Caco-2 (cell line): ENCODE measurements at regions of chr15 and their contacts with region 1.

Region 1: GRCh38 chr15:83323296-83323711 is 38.8 kb upstream of the BNC1 start:
- DNase-seq: peak; percentile 73 to 83
- H3K4me3 ChIP-seq: 0 out of 2 replicates have a peak overlapping the region, but pooled peaks have one; percentile 3
- H3K4me3 Mint-ChIP-seq: peak overlapping the region; percentile 64
- H3K27ac Mint-ChIP-seq: peak overlapping the region; percentile 77
- H3K4me1 ChIP-seq: peaks cover 13% of the 10 kb centered on the region
- H3K4me1 Mint-ChIP-seq: no peaks in the 10 kb centered on the region
- H3K27me3 ChIP-seq: no peaks in the 10 kb centered on the region
- H3K27me3 Mint-ChIP-seq: no peaks in the 10 kb centered on the region
- CTCF ChIP-seq: no peak

Region 2: DNA sequence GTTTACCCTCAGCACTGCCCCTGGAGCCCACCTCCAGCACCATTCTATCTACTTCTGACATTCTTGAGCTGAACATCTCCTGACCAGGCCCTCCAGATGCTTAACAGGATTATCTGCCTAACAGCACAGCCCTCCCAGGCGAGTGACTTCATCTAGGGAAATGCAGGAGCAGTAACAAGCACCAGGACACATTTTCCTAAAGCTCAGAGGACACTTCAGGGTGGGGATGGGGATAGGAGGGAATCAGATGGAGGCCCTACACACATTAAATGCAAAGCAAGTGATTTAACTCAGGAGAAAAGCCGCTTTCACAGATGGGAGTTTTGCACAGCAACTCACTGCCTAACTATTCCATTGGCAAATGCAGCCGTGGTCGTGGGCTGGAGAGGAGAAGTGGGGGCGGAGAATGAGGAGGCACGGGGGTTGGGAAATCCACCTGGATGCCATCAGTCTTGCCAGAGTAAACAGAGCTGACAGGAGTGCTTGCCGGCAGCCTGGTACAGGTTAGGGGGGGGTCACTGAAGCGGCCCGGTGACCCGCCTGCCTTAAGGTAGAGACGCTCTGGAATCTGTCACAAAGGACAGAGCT is 17.5 kb before region 1 on chr15:
- CTCF ChIA-PET with region 1: interaction called, 3 read pairs
- POLR2A ChIA-PET with region 1: no interaction called
- intact Hi-C with region 1: loop called (anchors 2 kb)
- DNase-seq: peak; percentile 84 to 90
- H3K4me3 ChIP-seq: 0 out of 2 replicates have a peak overlapping the region, but pooled peaks have one; percentile 8
- H3K4me3 Mint-ChIP-seq: peak overlapping the region; percentile 54
- H3K27ac Mint-ChIP-seq: peak overlapping the region; percentile 74
- H3K4me1 ChIP-seq: peaks cover 35% of the 10 kb centered on the region
- H3K4me1 Mint-ChIP-seq: peaks cover 23% of the 10 kb centered on the region
- H3K27me3 ChIP-seq: no peaks in the 10 kb centered on the region
- H3K27me3 Mint-ChIP-seq: no peaks in the 10 kb centered on the region
- CTCF ChIP-seq: no peak

Region 3: DNA sequence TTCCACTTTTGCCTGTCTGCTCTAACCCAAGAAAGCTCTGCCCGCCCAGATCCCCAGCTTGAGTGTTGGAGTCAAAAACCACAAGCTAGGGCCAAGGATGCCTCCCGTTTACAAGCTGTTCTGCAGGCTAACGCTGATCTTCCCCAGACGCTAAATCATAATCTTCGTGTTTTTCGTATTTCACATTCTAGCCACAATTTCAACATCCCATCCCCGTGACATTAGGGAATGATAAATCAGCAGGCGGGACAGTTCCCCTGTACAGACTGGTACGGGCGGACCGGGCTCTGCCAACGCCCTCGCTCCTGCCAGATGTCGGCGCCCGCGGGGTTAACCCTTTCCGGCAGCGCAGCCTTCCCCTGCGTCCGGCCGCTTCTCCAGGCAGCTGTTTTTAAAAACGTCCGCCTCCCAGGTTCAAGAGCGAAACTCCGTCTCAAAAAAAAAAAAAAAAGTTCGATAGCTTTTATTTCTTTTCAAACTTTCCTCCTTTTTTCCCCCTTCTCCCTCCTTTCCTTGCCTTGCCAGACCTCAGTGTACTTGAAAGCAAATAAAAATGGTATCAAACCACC is 42.1 kb after region 1 on chr15:
- CTCF ChIA-PET with region 1: no interaction called
- POLR2A ChIA-PET with region 1: no interaction called
- intact Hi-C with region 1: no loop called
- DNase-seq: no peak
- H3K4me3 ChIP-seq: no peak overlapping the region
- H3K4me3 Mint-ChIP-seq: peak overlapping the region; percentile 46
- H3K27ac Mint-ChIP-seq: no peak overlapping the region
- H3K4me1 ChIP-seq: no peaks in the 10 kb centered on the region
- H3K4me1 Mint-ChIP-seq: peaks cover 5% of the 10 kb centered on the region
- H3K27me3 ChIP-seq: no peaks in the 10 kb centered on the region
- H3K27me3 Mint-ChIP-seq: peaks cover 23% of the 10 kb centered on the region
- CTCF ChIP-seq: no peak

Region 4: GRCh38 chr15:83734487-83734886 is 411.2 kb after region 1 on chr15:
- CTCF ChIA-PET with region 1: no interaction called
- POLR2A ChIA-PET with region 1: no interaction called
- intact Hi-C with region 1: no loop called
- DNase-seq: peak in 1 of 2 experiments; percentile 3
- H3K4me3 ChIP-seq: no peak overlapping the region
- H3K4me3 Mint-ChIP-seq: no peak overlapping the region
- H3K27ac Mint-ChIP-seq: no peak overlapping the region
- H3K4me1 ChIP-seq: no peaks in the 10 kb centered on the region
- H3K4me1 Mint-ChIP-seq: no peaks in the 10 kb centered on the region
- H3K27me3 ChIP-seq: no peaks in the 10 kb centered on the region
- H3K27me3 Mint-ChIP-seq: peaks cover under 1% of the 10 kb centered on the region
- CTCF ChIP-seq: no peak